ENCODE measurements at regions of chr2 and their contacts with region 1.

Region 1: DNA sequence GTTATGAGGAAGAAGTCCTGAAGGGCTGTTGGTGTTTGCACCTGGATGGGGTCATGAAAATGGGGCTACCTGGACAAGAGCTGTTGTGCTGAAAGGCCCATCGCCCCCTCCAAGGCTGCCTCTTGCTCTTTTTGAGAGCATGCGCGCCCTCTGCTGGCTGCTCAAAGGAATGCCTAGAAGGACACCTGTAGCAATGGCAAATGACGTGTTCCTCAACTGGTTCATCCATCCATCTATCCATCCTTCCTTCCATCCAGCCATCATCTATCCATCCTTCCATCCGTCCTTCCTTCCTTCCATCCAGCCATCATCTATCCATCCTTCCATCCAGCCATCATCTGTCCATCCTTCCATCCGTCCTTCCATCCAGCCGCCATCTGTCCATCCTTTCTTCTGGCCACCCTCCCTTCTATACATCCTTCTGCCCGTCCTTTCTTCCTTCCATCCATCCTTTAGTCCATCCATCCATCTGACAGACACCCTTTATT is 17.2 kb upstream of the RPL31 start:
- DNase-seq: peak; percentile 82
- H3K4me3 ChIP-seq: no peak overlapping the region; a peak in 1 of 4 replicates
- H3K27ac ChIP-seq: no peak overlapping the region
- H3K4me1 ChIP-seq: no peaks in the 10 kb centered on the region; a peak in 1 of 4 replicates
- H3K27me3 ChIP-seq: no peaks in the 10 kb centered on the region
- CTCF ChIP-seq: peak; percentile 97
- EP300 ChIP-seq: no peak
- RAD21 ChIP-seq: peak; percentile 92

Region 2: GRCh38 chr2:100603948-100604633 is 380.8 kb before region 1 on chr2:
- CTCF ChIA-PET with region 1: interaction called, 118 read pairs
- POLR2A ChIA-PET with region 1: no interaction called
- DNase-seq: no peak
- H3K4me3 ChIP-seq: no peak overlapping the region
- H3K27ac ChIP-seq: peak overlapping the region in 1 of 2 experiments; percentile 80; a peak in 2 of 4 replicates
- H3K4me1 ChIP-seq: peaks cover 0 to 5% of the 10 kb centered on the region in 2 experiments; a peak in 1 of 4 replicates
- H3K27me3 ChIP-seq: no peaks in the 10 kb centered on the region
- CTCF ChIP-seq: no peak
- EP300 ChIP-seq: no peak
- RAD21 ChIP-seq: no peak

Region 3: GRCh38 chr2:100610381-100610831 is 374.5 kb before region 1 on chr2:
- CTCF ChIA-PET with region 1: interaction called, 118 read pairs
- POLR2A ChIA-PET with region 1: no interaction called
- DNase-seq: peak; percentile 80
- H3K4me3 ChIP-seq: no peak overlapping the region; a peak in 1 of 4 replicates
- H3K27ac ChIP-seq: no peak overlapping the region
- H3K4me1 ChIP-seq: no peaks in the 10 kb centered on the region
- H3K27me3 ChIP-seq: no peaks in the 10 kb centered on the region
- CTCF ChIP-seq: peak; percentile 80
- EP300 ChIP-seq: no peak
- RAD21 ChIP-seq: peak; percentile 92

Region 4: DNA sequence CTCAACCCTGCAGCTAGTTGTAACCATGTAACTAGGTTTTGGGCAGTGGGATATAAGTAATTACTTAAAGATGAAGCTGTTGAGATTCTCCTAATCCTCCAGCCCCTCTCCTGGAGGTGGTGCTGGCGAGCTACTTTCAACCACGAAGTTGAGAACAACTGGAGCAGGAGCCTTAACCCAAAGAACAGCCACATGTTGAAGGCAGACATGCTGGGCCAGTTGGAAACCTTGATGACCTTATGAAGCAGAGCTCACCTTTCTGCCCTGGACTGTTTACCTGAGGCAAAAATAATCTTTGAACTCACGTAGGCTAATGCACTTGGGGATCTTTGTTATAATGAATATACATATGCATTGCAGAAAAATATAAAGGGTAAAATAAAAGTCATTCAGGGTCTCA is 254.6 kb before region 1 on chr2:
- CTCF ChIA-PET with region 1: interaction called, 16 read pairs
- POLR2A ChIA-PET with region 1: no interaction called
- DNase-seq: peak; percentile 21
- H3K4me3 ChIP-seq: no peak overlapping the region
- H3K27ac ChIP-seq: no peak overlapping the region
- H3K4me1 ChIP-seq: peaks cover 0 to 17% of the 10 kb centered on the region in 2 experiments; a peak in 3 of 4 replicates
- H3K27me3 ChIP-seq: no peaks in the 10 kb centered on the region
- CTCF ChIP-seq: peak; percentile 78
- EP300 ChIP-seq: no peak
- RAD21 ChIP-seq: peak; percentile 76

Measured in SK-N-SH (cell line).